ENCODE measurements at regions of chr16 and their contacts with region 1.

Region 1: GRCh38 chr16:2867987-2868789 is 10.2 kb upstream of the PRSS22 start:
- DNase-seq: peak; percentile 91
- H3K4me3 Mint-ChIP-seq: peak overlapping the region; percentile 89
- H3K27ac Mint-ChIP-seq: peak overlapping the region; percentile 94
- H3K4me1 Mint-ChIP-seq: peaks cover 4% of the 10 kb centered on the region
- H3K27me3 Mint-ChIP-seq: no peaks in the 10 kb centered on the region
- CTCF ChIP-seq: peak; percentile 94

Region 2: GRCh38 chr16:2682209-2683021 is 185.8 kb before region 1 on chr16 and contains the start of gene KCTD5:
- CTCF ChIA-PET with region 1: no interaction called
- POLR2A ChIA-PET with region 1: interaction called, 13 read pairs
- intact Hi-C with region 1: no loop called
- DNase-seq: peak; percentile 94
- H3K4me3 Mint-ChIP-seq: peak within 1 kb of the TSS; percentile 96
- H3K27ac Mint-ChIP-seq: peak within 1 kb of the TSS; percentile 97
- H3K4me1 Mint-ChIP-seq: no peaks in the 10 kb centered on the region
- H3K27me3 Mint-ChIP-seq: no peaks in the 10 kb centered on the region
- CTCF ChIP-seq: no peak
- total RNA-seq, gene KCTD5: 49.4 and 51.6 TPM in 2 replicates

Region 3: GRCh38 chr16:2777231-2777902 is 90.8 kb before region 1 on chr16 and contains the start of gene ELOB:
- CTCF ChIA-PET with region 1: interaction called, 9 read pairs
- POLR2A ChIA-PET with region 1: interaction called, 61 read pairs
- intact Hi-C with region 1: loop called (anchors 2 kb)
- DNase-seq: peak; percentile 83
- H3K4me3 Mint-ChIP-seq: peak within 1 kb of the TSS; percentile 96
- H3K27ac Mint-ChIP-seq: peak within 1 kb of the TSS; percentile 96
- H3K4me1 Mint-ChIP-seq: peaks cover 19% of the 10 kb centered on the region
- H3K27me3 Mint-ChIP-seq: no peaks in the 10 kb centered on the region
- CTCF ChIP-seq: no peak
- total RNA-seq, gene ELOB: 438 and 504 TPM in 2 replicates

Region 4: GRCh38 chr16:2816751-2817339 is 51.3 kb before region 1 on chr16 and contains the start of gene PRSS21:
- CTCF ChIA-PET with region 1: interaction called, 7 read pairs
- POLR2A ChIA-PET with region 1: no interaction called
- intact Hi-C with region 1: loop called (anchors 2 kb)
- DNase-seq: peak; percentile 37
- H3K4me3 Mint-ChIP-seq: peak within 1 kb of the TSS; percentile 64
- H3K27ac Mint-ChIP-seq: peak within 1 kb of the TSS; percentile 35
- H3K4me1 Mint-ChIP-seq: no peaks in the 10 kb centered on the region
- H3K27me3 Mint-ChIP-seq: no peaks in the 10 kb centered on the region
- CTCF ChIP-seq: peak; percentile 36
- total RNA-seq, gene PRSS21: 16.4 TPM in 2 replicates

Region 5: DNA sequence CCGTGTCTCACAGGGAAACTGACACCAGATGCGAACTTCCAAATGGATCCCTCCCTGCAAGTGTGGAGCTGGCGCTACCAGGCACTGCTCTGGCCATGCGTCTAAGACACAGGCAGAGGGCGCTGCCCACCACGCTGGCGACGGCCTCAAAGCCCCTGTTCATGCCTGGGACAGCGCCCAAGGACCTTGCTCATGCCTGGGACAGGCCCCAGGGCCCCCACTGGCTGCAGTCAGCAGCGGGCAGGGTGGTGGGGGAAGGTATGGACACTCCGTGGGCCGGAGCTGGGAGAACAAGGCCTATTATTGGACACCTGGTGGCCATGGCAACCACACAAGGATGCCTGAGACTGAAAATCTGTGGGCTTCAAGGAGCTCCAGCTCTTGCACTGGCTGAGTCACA is 29.3 kb before region 1 on chr16:
- CTCF ChIA-PET with region 1: interaction called, 4 read pairs
- POLR2A ChIA-PET with region 1: interaction called, 5 read pairs
- intact Hi-C with region 1: loop called (anchors 1 kb)
- DNase-seq: peak; percentile 69
- H3K4me3 Mint-ChIP-seq: no peak overlapping the region
- H3K27ac Mint-ChIP-seq: no peak overlapping the region
- H3K4me1 Mint-ChIP-seq: peaks cover 31% of the 10 kb centered on the region
- H3K27me3 Mint-ChIP-seq: no peaks in the 10 kb centered on the region
- CTCF ChIP-seq: peak; percentile 80

Region 6: DNA sequence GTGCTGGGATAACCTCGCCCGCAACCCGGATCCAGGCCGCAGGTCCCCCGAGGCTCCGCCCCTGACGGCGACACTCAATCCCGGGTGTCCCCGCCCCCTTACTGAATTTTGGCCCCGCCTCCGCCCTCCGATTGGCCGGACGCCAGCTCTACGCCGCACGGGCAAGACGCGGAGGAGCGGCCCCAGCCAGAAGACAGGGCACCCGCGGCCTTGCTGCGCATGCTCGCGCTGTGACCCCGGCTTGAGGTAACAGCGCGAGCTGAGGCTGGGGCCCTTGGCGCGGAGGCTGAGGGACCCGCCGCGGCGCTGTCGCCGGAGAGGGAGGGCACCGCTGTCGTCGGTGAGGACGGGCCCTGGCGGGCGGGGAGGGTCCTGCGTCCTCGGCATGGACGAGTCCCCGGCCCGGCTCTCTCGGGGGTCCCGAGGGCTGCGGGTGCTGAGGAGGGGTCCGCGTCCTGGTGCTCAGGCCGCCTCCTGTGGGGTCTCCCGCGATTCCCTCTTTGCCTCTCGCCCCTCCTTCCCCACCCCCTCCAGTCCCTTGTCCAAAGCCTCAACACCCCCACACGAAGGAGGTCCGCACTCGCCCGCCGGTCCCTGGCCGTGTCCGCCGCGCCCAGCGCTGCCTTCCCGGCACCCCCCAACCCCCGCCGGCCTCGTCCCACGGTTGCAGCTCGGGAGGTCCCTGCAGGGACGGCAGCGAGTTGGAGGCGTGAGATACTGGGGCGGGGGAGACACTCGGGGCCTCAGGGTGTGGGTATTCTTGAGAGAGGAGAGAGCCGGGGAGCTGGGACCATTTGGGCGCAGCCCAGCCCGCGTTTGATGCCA is 15.1 kb after region 1 on chr16 and contains the start of gene FLYWCH2:
- CTCF ChIA-PET with region 1: interaction called, 7 read pairs
- POLR2A ChIA-PET with region 1: interaction called, 11 read pairs
- intact Hi-C with region 1: no loop called
- DNase-seq: peak; percentile 96
- H3K4me3 Mint-ChIP-seq: peak within 1 kb of the TSS; percentile 77
- H3K27ac Mint-ChIP-seq: peak within 1 kb of the TSS; percentile 73
- H3K4me1 Mint-ChIP-seq: peaks cover 5% of the 10 kb centered on the region
- H3K27me3 Mint-ChIP-seq: no peaks in the 10 kb centered on the region
- CTCF ChIP-seq: no peak
- total RNA-seq, gene FLYWCH2: 24.4 and 27.7 TPM in 2 replicates

Region 7: DNA sequence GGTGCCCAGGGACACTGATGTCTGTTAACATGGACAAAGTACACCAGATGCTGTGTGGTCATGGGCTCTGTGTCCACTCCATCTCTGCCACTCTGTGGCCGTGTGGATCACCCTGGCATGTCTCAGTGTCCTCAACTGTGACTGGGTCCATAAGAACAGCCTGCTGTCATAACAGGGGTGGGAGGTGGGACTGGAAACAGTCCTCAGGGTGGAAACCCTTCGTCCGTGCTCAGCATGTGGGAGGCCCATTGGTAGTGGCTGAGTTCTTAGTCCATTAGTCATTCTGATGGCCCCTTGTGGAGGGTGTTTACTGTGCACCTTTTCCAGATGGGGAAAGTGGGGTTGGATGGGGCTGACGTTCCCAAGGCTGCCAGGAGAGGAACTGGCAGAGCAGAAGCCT is 27.6 kb after region 1 on chr16:
- CTCF ChIA-PET with region 1: no interaction called
- POLR2A ChIA-PET with region 1: no interaction called
- intact Hi-C with region 1: no loop called
- DNase-seq: no peak
- H3K4me3 Mint-ChIP-seq: no peak overlapping the region
- H3K27ac Mint-ChIP-seq: no peak overlapping the region
- H3K4me1 Mint-ChIP-seq: no peaks in the 10 kb centered on the region
- H3K27me3 Mint-ChIP-seq: no peaks in the 10 kb centered on the region
- CTCF ChIP-seq: no peak

Region 8: DNA sequence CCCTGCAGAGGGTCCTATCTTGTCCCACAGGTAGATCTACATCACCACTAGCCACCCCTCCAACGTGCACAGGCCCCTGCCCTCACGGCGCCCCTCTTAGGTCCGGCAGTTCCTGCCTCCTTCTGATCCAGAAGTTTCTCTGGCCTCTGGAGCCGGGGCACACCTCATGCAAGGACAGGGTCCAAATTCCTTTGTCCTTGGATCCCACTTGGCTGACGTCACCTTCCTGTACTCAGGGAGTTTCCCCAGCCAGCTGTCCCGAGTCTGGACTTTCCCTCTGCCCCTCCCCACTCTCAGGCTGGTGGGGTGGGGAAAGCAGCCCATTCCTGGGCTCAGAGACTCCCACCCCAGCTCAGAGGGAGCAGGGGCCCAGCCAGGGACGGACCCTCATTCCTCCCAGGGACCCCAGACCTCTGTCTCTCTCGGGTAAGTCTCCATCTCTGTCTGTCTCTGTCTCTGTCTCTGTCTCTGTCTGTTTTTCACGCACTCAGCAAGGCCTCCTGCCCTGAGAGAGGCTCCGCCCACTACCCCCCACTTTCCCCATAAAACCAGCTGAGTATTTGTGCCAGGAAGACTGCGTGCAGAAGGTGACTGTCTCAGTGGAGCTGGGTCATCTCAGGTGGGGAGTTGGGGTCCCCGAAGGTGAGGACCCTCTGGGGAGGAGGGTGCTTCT is 197.0 kb after region 1 on chr16 and contains the start of gene IL32:
- CTCF ChIA-PET with region 1: no interaction called
- POLR2A ChIA-PET with region 1: no interaction called
- intact Hi-C with region 1: no loop called
- DNase-seq: peak; percentile 67
- H3K4me3 Mint-ChIP-seq: peak within 1 kb of the TSS; percentile 64
- H3K27ac Mint-ChIP-seq: peak within 1 kb of the TSS; percentile 93
- H3K4me1 Mint-ChIP-seq: peaks cover 11% of the 10 kb centered on the region
- H3K27me3 Mint-ChIP-seq: no peaks in the 10 kb centered on the region
- CTCF ChIP-seq: no peak
- total RNA-seq, gene IL32: 24.0 and 29.8 TPM in 2 replicates

Region 9: DNA sequence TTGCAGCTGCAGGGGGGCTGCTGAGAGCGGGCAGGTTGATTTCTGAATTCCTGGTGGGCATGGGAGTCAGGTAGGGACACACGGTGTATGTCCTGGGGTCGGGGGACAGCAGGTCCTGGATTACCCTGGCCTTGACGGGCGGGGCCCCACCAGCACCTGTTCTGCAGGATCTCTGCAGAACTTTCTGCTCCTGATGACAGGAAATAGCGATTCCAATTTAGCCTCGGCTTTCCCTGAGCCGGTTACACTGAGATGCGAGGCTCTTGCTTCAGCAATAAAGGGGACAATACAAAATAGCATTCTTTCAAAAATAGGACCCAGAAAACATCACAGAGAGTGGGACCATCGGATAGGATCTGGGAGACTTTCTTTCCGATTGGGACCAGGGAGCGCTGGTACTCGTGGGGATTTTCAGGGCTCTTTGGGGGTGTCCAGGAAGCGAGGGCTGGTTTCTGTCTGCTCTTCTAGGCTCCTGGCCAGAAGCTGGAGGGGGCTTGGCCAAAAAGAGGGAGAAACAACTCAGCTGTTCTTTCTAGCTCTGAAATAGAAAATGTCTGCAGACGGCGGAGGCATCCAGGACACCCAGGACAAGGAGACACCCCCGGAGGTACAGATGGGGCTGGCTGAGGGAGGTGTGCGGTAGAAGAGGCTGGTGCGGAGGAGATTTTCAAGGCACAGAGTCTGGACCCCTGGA is 244.8 kb after region 1 on chr16:
- CTCF ChIA-PET with region 1: no interaction called
- POLR2A ChIA-PET with region 1: no interaction called
- intact Hi-C with region 1: no loop called
- DNase-seq: no peak
- H3K4me3 Mint-ChIP-seq: peak overlapping the region; percentile 85
- H3K27ac Mint-ChIP-seq: peak overlapping the region; percentile 29
- H3K4me1 Mint-ChIP-seq: peaks cover 10% of the 10 kb centered on the region
- H3K27me3 Mint-ChIP-seq: no peaks in the 10 kb centered on the region
- CTCF ChIP-seq: no peak